ENCODE measurements at regions of chr15 and their contacts with region 1.

Region 1: DNA sequence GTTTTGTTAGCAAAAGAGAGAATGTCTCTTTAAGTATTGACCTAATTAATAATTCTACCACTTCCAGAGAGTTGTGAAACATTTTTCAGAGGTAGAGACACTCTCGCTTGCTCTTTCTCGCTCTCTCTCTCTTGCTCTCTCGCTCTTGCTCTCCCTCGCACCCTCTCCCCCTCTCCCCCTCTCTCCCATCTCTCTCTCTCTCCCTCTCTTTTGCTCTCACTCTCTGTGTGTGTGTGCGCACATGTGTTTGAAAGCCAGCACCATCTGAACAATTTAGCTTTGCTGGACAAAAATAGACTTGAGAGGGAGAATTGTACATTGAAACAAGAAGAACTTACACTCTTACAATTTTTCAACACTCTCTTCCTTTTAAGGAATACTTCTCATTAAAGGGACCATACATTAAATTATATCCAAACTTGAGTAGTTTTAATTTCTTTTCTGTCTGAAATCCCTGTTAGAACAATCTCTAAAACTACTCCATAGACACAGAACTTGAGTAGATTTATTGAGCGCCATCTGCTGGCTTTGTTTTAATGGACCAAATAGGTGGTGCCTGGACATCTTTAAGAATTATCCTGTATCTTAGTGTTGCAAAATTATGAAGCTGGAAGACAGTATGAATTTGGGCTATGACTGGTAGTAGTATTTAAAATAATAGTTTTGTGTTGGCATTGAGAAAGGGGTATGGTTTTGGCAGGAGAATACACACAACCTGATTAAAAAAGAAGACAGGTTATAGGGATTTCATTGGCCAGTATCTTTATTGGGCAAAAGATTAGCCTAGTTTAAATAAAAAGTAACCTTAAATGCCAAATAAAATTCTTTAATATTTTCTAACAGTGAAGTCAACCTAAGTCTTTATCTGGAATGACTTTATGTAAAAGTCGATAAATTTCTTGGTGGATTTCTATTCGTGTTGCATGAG is 124.6 kb downstream of the AKAP13 start:
- DNase-seq: peak; percentile 29

Region 2: GRCh38 chr15:85296615-85297402 is 208.2 kb before region 1 on chr15:
- CTCF ChIA-PET with region 1: interaction called, 13 read pairs
- POLR2A ChIA-PET with region 1: no interaction called
- DNase-seq: peak; percentile 75

Region 3: GRCh38 chr15:85578941-85579701 is 74.1 kb after region 1 on chr15:
- CTCF ChIA-PET with region 1: no interaction called
- POLR2A ChIA-PET with region 1: no interaction called
- DNase-seq: no peak